ENCODE measurements at regions of chr4 and their contacts with region 1.

Region 1: DNA sequence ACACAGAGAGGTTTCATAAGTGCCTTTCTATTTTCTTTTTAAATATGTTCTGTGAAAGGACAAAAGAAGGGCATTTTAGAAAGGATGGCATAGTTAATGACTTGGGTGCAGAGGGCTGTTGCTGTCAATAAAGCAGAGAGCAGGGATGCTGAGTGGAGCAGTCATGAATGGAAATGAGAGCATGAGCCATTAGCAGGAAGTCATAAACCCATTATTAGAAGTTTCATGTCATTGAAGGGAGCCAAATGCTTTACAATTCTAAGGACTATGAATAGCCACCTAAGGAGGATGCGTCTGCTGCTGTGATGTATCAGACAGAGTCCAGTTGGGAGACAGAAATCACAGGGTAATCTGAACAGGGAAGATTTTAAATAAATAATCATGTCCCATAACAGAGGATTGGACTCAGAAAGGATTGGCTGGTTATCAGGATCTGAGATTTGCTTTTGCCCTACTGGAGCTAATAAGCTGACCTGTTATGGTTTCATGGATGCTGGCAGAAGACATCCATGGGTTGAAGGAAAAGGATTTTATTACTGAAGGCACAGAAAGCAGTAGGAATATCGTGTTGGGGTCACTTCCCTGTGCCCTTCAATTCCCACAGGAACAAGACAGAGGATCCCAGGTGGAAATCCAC is 47.5 kb upstream of the WDR19 start:
- DNase-seq: no peak
- ATAC-seq: peak; percentile 70
- H3K4me3 ChIP-seq: no peak overlapping the region
- H3K27ac ChIP-seq: peak overlapping the region; percentile 27; the same call in 1 of the 2 replicates
- H3K4me1 ChIP-seq: peaks cover 6% of the 10 kb centered on the region
- H3K27me3 ChIP-seq: no peaks in the 10 kb centered on the region
- CTCF ChIP-seq: no peak
- EP300 ChIP-seq: no peak
- POLR2A ChIP-seq: no peak
- RAD21 ChIP-seq: no peak

Region 2: GRCh38 chr4:38872604-38873006 is 262.2 kb before region 1 on chr4:
- CTCF ChIA-PET with region 1: interaction called, 10 read pairs
- POLR2A ChIA-PET with region 1: no interaction called
- RAD21 ChIA-PET with region 1: interaction called, 3 read pairs
- SMC1A ChIA-PET with region 1: no interaction called
- in situ Hi-C with region 1: no loop called
- intact Hi-C with region 1: no loop called
- DNase-seq: no peak
- ATAC-seq: no peak
- H3K4me3 ChIP-seq: no peak overlapping the region
- H3K27ac ChIP-seq: no peak overlapping the region
- H3K4me1 ChIP-seq: peaks cover 7% of the 10 kb centered on the region
- H3K27me3 ChIP-seq: no peaks in the 10 kb centered on the region
- CTCF ChIP-seq: no peak
- EP300 ChIP-seq: no peak
- POLR2A ChIP-seq: no peak
- RAD21 ChIP-seq: no peak

Region 3: DNA sequence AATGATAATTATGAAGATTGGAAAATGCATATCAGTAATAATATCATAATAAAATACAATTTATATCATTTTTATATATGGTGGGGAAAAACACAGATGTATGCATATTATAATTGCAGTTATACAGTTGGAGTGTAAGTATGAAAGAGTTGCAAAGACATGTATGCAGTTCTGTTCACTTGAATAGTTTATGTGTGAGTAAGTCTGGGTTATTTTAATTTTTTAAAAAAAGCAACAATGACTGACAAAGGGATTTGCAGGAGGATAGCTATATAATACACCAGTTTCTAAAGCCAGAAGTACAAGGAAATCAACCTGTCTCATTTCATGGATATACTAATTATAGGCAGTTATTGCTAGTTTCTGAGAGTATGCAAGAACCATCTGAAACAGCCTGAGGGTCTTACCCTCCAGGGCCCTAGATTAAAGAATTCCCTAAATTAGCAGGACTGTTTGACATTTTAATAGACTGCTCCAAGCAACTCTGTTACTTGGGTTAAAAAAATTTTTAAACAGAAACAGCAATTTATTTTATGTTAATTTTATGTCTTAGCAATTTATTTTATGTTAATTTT is 227.0 kb before region 1 on chr4:
- CTCF ChIA-PET with region 1: interaction called, 295 read pairs
- POLR2A ChIA-PET with region 1: interaction called, 22 read pairs
- RAD21 ChIA-PET with region 1: interaction called, 214 read pairs
- SMC1A ChIA-PET with region 1: interaction called, 193 read pairs
- in situ Hi-C with region 1: loop called (anchors 5 kb)
- intact Hi-C with region 1: loop called (anchors 1 kb)
- DNase-seq: no peak
- ATAC-seq: no peak
- H3K4me3 ChIP-seq: no peak overlapping the region
- H3K27ac ChIP-seq: no peak overlapping the region
- H3K4me1 ChIP-seq: no peaks in the 10 kb centered on the region
- H3K27me3 ChIP-seq: no peaks in the 10 kb centered on the region
- CTCF ChIP-seq: no peak
- EP300 ChIP-seq: no peak
- POLR2A ChIP-seq: no peak
- RAD21 ChIP-seq: no peak

Region 4: GRCh38 chr4:39044364-39044955 is 90.3 kb before region 1 on chr4:
- CTCF ChIA-PET with region 1: interaction called, 21 read pairs
- POLR2A ChIA-PET with region 1: no interaction called
- RAD21 ChIA-PET with region 1: interaction called, 13 read pairs
- SMC1A ChIA-PET with region 1: interaction called, 8 read pairs
- in situ Hi-C with region 1: no loop called
- intact Hi-C with region 1: loop called (anchors 1 kb)
- DNase-seq: peak; percentile 90
- ATAC-seq: peak; percentile 83
- H3K4me3 ChIP-seq: peak overlapping the region; percentile 83
- H3K27ac ChIP-seq: peak overlapping the region; percentile 81
- H3K4me1 ChIP-seq: peaks cover 14% of the 10 kb centered on the region
- H3K27me3 ChIP-seq: no peaks in the 10 kb centered on the region
- CTCF ChIP-seq: peak in 1 of 3 experiments; percentile 23; a peak in 1 of 6 replicates
- EP300 ChIP-seq: peak in 1 of 2 experiments; percentile 52; a peak in 1 of 4 replicates
- POLR2A ChIP-seq: peak; percentile 74
- RAD21 ChIP-seq: no peak

Region 5: DNA sequence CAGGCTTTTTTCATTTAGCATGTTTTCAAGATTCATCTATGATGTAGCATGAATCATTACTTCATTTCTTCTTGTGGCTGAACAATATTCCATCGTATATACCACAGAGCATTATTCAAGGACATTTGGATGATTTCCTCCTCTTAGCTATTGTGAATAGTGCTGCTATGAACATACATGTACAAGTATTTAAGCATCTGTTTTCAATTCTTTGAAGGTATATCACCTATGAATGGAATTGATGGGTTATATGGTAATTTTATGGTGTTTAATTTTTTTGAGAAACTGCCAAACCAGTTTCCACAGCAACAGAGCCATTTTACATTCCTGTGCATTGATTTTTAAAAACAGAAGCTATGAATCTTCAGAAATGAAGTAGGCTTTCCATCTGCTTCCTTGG is 11.4 kb after region 1 on chr4:
- CTCF ChIA-PET with region 1: interaction called, 8 read pairs
- POLR2A ChIA-PET with region 1: no interaction called
- RAD21 ChIA-PET with region 1: interaction called, 3 read pairs
- SMC1A ChIA-PET with region 1: interaction called, 10 read pairs
- in situ Hi-C with region 1: no loop called
- intact Hi-C with region 1: no loop called
- DNase-seq: no peak
- ATAC-seq: no peak
- H3K4me3 ChIP-seq: no peak overlapping the region
- H3K27ac ChIP-seq: no peak overlapping the region
- H3K4me1 ChIP-seq: no peaks in the 10 kb centered on the region
- H3K27me3 ChIP-seq: no peaks in the 10 kb centered on the region
- CTCF ChIP-seq: no peak
- EP300 ChIP-seq: no peak
- POLR2A ChIP-seq: no peak
- RAD21 ChIP-seq: no peak

Region 6: GRCh38 chr4:39259571-39260330 is 125.0 kb after region 1 on chr4:
- CTCF ChIA-PET with region 1: no interaction called
- POLR2A ChIA-PET with region 1: no interaction called
- RAD21 ChIA-PET with region 1: no interaction called
- SMC1A ChIA-PET with region 1: no interaction called
- in situ Hi-C with region 1: no loop called
- intact Hi-C with region 1: no loop called
- DNase-seq: no peak
- ATAC-seq: no peak
- H3K4me3 ChIP-seq: no peak overlapping the region
- H3K27ac ChIP-seq: no peak overlapping the region
- H3K4me1 ChIP-seq: no peaks in the 10 kb centered on the region
- H3K27me3 ChIP-seq: no peaks in the 10 kb centered on the region
- CTCF ChIP-seq: no peak
- EP300 ChIP-seq: no peak
- POLR2A ChIP-seq: no peak
- RAD21 ChIP-seq: no peak